ENCODE measurements at regions of chr1 and their contacts with region 1.

Region 1: GRCh38 chr1:43946236-43947060 is at the start of gene IPO13:
- DNase-seq: peak; percentile 95
- ATAC-seq: peak; percentile 93 to 96 (median 94)
- H3K4me3 ChIP-seq: peak within 1 kb of the TSS; percentile 53 to 94 (median 72)
- H3K27ac ChIP-seq: peak within 1 kb of the TSS; percentile 90 to 100 (median 97)
- H3K4me1 ChIP-seq: peaks cover 16 to 61% (median 44%) of the 10 kb centered on the region in 9 donors
- H3K27me3 ChIP-seq: no peaks in the 10 kb centered on the region
- CTCF ChIP-seq: peak; percentile 36 to 87 (median 75)
- total RNA-seq, gene IPO13: 53.3 to 66.1 (median 56.8) TPM

Region 2: GRCh38 chr1:43974443-43975248 is 28.2 kb after region 1 on chr1 and contains the start of gene ATP6V0B:
- intact Hi-C with region 1: loop called in 2 of 10 experiments (anchors 2 kb)
- DNase-seq: peak; percentile 96 to 97
- ATAC-seq: peak; percentile 86 to 94 (median 91)
- H3K4me3 ChIP-seq: peak within 1 kb of the TSS; percentile 72 to 99 (median 88)
- H3K27ac ChIP-seq: peak within 1 kb of the TSS; percentile 82 to 98 (median 92)
- H3K4me1 ChIP-seq: peaks cover 6 to 59% (median 53%) of the 10 kb centered on the region in 9 donors
- H3K27me3 ChIP-seq: no peaks in the 10 kb centered on the region
- CTCF ChIP-seq: peak in 4 of 9 donors; percentile 24 to 58 (median 47)
- total RNA-seq, gene ATP6V0B: 63.1 to 112 (median 72.9) TPM

Region 3: GRCh38 chr1:44036409-44037139 is 90.1 kb after region 1 on chr1:
- intact Hi-C with region 1: no loop called
- DNase-seq: peak; percentile 44 to 60
- ATAC-seq: peak; percentile 53 to 76 (median 66)
- H3K4me3 ChIP-seq: no peak overlapping the region
- H3K27ac ChIP-seq: peak overlapping the region in 9 of 10 donors; percentile 3 to 74 (median 46)
- H3K4me1 ChIP-seq: peaks cover 6 to 38% (median 23%) of the 10 kb centered on the region in 9 donors
- H3K27me3 ChIP-seq: peaks cover 0 to 5% (median 0%) of the 10 kb centered on the region in 7 donors
- CTCF ChIP-seq: peak; percentile 50 to 88 (median 79)

Region 4: DNA sequence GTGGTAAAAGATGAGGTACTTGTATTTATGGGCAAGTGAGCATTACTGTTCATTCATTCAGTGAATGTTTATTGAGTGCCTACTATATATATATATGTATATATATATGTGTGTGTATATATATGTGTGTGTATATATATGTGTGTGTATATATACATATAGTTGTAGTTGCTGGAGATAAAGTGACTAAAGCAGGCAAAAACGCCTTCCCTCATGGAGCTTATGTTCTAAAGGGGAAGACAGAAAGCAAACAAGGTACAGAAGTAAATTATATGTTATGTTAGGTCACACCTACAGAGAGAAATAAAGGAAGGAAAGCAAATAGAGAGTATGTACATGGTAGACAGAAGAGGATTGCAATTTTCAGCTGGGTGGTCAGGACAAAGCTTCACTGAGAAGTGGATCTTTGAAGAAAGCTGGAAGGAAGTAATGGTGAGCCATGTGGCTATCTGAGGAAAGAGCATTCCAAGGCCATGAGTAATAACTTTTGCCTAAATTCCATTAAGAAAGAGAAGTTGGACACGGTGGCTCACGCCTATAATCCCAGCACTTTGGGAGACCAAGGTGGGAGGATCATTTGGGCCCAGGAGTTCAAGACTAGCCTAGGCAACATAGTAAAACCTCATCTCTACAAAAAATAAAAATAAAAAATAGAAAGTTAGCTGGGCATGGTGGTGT is 138.7 kb after region 1 on chr1:
- intact Hi-C with region 1: no loop called
- DNase-seq: no peak
- ATAC-seq: no peak
- H3K4me3 ChIP-seq: no peak overlapping the region
- H3K27ac ChIP-seq: no peak overlapping the region
- H3K4me1 ChIP-seq: peaks cover 0 to 12% (median 0%) of the 10 kb centered on the region in 9 donors
- H3K27me3 ChIP-seq: peaks cover 0 to 22% (median 0%) of the 10 kb centered on the region in 7 donors
- CTCF ChIP-seq: no peak

Region 5: DNA sequence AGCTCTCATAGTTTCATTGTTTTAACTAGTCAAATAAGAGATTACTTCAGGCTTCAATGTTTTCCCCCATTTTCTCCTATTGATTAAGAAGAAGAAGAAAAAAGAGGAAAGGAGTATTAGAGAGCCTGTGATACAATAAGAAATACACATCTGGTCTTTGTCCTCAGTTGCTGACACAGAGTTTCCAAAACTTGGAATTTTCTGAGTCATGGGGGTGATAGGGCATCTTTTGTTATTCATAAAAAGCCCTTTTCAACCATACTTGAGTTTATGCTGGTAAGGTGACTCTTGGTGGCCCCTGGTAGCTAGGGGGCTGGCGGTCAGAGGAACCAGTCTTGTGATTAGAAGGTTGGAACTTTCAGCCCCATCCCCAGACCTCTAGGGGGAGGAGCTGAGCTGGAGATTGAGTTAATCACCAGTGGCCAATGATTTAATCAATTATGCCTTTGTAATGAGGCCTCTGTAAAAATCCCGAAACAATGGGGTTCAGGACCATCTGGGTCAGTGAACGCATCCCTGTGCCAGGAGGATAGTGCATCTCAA is 223.9 kb after region 1 on chr1:
- intact Hi-C with region 1: no loop called
- DNase-seq: no peak
- ATAC-seq: no peak
- H3K4me3 ChIP-seq: no peak overlapping the region
- H3K27ac ChIP-seq: no peak overlapping the region
- H3K4me1 ChIP-seq: no peaks in the 10 kb centered on the region
- H3K27me3 ChIP-seq: peaks cover 0 to 18% (median 12%) of the 10 kb centered on the region in 7 donors
- CTCF ChIP-seq: no peak

Measured in heart right ventricle (tissue), 16 donors.